AG04450 (cell line): ENCODE measurements at regions of chr3 and their contacts with region 1.

Region 1: DNA sequence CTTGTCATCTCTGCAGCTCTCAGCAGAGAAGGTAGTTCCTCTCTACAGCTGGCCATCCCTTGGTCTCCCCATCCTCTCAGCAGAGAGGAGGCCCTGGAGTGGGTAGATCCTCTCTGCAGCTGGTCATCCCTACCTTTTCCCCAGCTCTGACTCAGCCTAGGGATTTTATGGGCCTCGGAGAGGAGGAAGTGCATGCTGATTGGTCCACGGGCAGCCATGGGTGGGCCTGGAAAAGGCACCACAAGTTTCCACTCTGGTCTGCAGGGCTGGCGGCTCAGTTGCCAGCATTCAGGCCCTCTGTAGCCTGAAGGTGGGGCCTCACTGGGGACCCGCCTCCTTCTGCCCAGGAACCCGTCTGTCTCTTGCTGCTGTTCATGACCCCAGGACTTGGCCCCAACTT is 36.9 kb downstream of the NR1D2 start:
- DNase-seq: no peak
- H3K4me3 ChIP-seq: no peak overlapping the region
- H3K27ac ChIP-seq: no peak overlapping the region
- H3K27me3 ChIP-seq: no peaks in the 10 kb centered on the region
- CTCF ChIP-seq: no peak

Region 2: DNA sequence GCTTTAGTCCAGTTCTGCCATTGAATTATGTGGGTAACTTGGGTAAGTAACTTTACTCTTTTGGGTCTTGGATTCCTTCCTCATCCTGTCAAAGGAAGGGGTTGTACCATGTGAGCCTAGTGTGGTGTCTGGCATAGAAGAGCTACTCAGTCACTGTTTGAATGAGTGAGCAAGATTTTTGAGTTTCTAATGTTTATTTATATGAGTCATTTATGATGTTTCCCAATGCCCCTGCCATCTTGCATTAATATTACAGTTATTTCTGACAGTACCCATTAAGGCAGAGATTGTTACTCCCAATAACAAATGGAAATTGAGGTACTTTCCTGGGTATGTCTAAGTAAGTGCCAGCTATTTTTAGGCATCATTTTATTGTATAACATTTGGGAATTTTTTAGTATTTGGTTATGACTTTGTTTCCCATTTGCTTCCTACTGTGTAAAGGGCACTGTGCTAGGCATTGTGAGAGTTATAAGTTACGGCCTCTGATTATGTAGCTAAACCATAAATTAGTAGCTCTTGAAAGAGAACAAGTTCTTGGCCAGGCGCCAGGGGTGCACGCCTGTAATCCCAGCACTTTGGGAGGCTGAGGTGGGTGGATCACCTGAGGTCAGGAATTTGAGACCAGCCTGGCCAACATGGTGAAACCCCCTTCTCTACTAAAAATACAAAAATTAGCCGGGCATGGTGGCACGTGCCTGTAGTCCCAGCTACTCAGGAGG is 13.3 kb before region 1 on chr3:
- CTCF ChIA-PET with region 1: no interaction called
- POLR2A ChIA-PET with region 1: interaction called, 13 read pairs
- DNase-seq: no peak
- H3K4me3 ChIP-seq: no peak overlapping the region
- H3K27ac ChIP-seq: no peak overlapping the region
- H3K27me3 ChIP-seq: no peaks in the 10 kb centered on the region
- CTCF ChIP-seq: no peak